Activated CD4-positive, alpha-beta T cell treated with anti-CD3 and anti-CD28 coated beads, Interleukin-2, amount 10 ng/mL, durations not matched to agents 24 days and 14 days (primary cell): ENCODE measurements at regions of chr1 and their contacts with region 1.

Region 1: GRCh38 chr1:161159087-161159912 is at the start of gene USP21:
- DNase-seq: peak; percentile 98
- H3K4me3 Mint-ChIP-seq: peak within 1 kb of the TSS; percentile 91
- H3K27ac Mint-ChIP-seq: peak within 1 kb of the TSS; percentile 93
- H3K4me1 Mint-ChIP-seq: peaks cover 51% of the 10 kb centered on the region
- H3K27me3 Mint-ChIP-seq: no peaks in the 10 kb centered on the region
- total RNA-seq, gene USP21: 32.7 and 34.7 TPM in 2 replicates

Region 2: DNA sequence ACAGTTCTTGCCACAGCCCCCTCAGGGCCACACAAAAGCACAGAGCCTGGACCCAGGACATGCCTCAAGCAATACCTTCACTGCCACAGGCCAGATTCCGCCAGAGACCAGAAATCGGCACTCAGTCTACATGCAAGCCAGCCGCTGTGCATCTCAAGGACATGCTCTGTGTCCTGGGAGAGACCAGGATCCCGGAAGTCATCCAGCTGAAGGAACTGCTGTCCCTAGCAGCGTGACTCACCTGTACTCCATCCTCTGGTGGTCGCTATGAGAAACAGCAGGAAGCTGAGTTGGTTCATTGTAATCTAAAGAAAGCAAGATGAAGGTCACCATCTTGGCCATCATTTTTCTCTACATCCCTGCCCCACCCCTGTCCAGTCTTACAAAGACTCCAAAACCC is 274.7 kb before region 1 on chr1:
- intact Hi-C with region 1: no loop called
- DNase-seq: peak; percentile 76
- H3K4me3 Mint-ChIP-seq: no peak overlapping the region
- H3K27ac Mint-ChIP-seq: no peak overlapping the region
- H3K4me1 Mint-ChIP-seq: peaks cover 5% of the 10 kb centered on the region
- H3K27me3 Mint-ChIP-seq: peaks cover 9% of the 10 kb centered on the region

Region 3: GRCh38 chr1:161177112-161177935 is 18.0 kb after region 1 on chr1 and contains the start of gene B4GALT3:
- intact Hi-C with region 1: loop called (anchors 2 kb)
- DNase-seq: peak; percentile 99
- H3K4me3 Mint-ChIP-seq: peak within 1 kb of the TSS; percentile 100
- H3K27ac Mint-ChIP-seq: peak within 1 kb of the TSS; percentile 100
- H3K4me1 Mint-ChIP-seq: peaks cover 59% of the 10 kb centered on the region
- H3K27me3 Mint-ChIP-seq: no peaks in the 10 kb centered on the region
- total RNA-seq, gene B4GALT3: 65.1 and 69.9 TPM in 2 replicates